CD4-positive, alpha-beta memory T cell (primary cell): ENCODE measurements at regions of chr5 and their contacts with region 1.

Region 1: GRCh38 chr5:134637161-134637582 is 4.5 kb upstream of the SAR1B start:
- DNase-seq: no peak
- H3K4me3 ChIP-seq: no peak overlapping the region
- H3K4me3 Mint-ChIP-seq: no peak overlapping the region
- H3K27ac ChIP-seq: no peak overlapping the region
- H3K27ac Mint-ChIP-seq: no peak overlapping the region
- H3K4me1 ChIP-seq: peaks cover 4% of the 10 kb centered on the region
- H3K4me1 Mint-ChIP-seq: peaks cover 0 to 13% (median under 1%) of the 10 kb centered on the region in 4 donors
- H3K27me3 ChIP-seq: no peaks in the 10 kb centered on the region
- H3K27me3 Mint-ChIP-seq: no peaks in the 10 kb centered on the region

Region 2: DNA sequence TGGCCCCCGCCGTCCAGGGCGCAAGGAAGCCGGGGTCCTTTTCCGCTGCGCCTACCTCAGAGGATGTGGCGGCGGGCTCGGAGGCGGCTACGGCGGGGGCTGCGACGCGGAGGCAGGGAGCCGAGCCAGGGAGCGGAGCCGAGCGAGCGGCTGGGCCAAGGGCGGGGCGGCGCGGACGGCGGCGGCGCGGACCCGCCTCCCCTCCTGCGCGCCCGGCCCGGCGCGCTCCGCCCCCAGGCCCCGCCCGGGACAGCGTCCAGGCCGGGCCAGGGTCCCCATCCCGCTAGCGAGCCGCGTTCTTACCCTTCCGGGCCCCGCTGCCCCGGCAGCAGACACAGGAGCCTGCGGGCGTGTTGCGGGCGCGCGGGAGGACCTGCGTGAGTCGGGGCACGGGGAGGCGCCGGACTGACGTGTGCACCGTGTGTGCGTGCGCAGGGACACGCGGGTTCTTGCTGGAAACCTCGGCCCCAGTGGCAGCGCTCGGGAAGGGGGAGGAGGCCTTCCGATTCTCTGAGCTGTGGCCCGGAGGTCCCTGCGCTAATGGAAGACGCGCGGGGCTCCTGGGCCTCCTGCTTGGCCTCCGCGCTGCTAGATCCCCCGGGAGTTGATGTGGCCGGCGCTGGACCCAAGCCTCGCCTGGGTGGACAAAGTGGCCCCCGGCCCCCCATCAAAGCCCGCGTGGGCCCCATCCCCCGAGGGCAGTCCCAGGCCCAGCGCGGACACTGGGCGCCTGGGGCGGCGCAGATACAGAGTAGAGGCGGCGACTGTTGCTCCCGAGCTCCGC is 632.4 kb before region 1 on chr5 and contains the start of gene VDAC1:
- CTCF ChIA-PET with region 1: no interaction called
- POLR2A ChIA-PET with region 1: interaction called, 3 read pairs
- intact Hi-C with region 1: loop called (anchors 10 kb)
- DNase-seq: peak; percentile 89 to 95 (median 92)
- H3K4me3 ChIP-seq: peak within 1 kb of the TSS; percentile 61 to 81
- H3K4me3 Mint-ChIP-seq: peak within 1 kb of the TSS; percentile 89 to 99 (median 93)
- H3K27ac ChIP-seq: peak within 1 kb of the TSS; percentile 96
- H3K27ac Mint-ChIP-seq: peak within 1 kb of the TSS; percentile 96 to 99 (median 98)
- H3K4me1 ChIP-seq: peaks cover 49% of the 10 kb centered on the region
- H3K4me1 Mint-ChIP-seq: peaks cover 26 to 50% (median 38%) of the 10 kb centered on the region in 4 donors
- H3K27me3 ChIP-seq: no peaks in the 10 kb centered on the region
- H3K27me3 Mint-ChIP-seq: no peaks in the 10 kb centered on the region
- total RNA-seq, gene VDAC1: 45.1 to 46.4 TPM

Region 3: DNA sequence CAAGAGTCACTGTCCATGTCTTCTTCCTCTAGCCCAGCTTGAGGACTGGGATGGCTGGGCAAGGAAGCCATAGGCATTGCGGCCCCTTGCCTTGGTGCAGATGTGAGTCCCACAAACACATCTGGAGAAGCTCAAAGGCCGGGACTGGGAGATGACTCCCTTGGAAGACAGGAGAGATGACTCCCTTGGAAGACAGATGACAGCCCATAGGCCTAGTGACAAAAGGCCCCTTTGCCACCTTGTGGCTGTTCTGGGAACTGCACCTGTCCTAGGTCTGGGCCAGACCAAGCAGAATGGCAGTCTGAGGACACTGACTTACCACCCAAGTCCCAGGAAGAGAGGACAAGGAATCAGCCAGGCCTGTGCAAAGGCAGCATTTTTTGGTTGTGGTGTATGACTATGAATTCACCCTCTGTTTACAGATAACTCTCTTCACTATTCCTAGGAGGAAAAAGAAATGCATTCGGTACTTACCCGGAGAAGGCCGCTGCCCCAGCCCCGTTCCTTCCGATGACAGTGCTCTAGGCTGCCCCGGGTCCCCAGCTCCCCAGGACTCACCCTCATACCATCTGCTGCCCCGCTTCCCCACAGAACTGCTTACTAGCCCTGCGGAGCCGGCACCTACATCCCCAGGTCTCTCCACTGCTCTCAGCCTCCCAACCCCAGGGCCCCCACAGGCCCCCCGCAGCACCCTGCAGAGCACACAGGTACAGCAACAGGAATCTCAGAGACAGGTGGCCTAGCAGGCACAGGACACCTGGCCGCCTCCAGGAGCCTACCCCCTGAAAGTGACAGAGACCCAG is 491.2 kb before region 1 on chr5:
- CTCF ChIA-PET with region 1: no interaction called
- POLR2A ChIA-PET with region 1: no interaction called
- intact Hi-C with region 1: no loop called
- DNase-seq: peak; percentile 74 to 83 (median 77)
- H3K4me3 ChIP-seq: no peak overlapping the region
- H3K4me3 Mint-ChIP-seq: peak overlapping the region in 2 of 8 donors; percentile 26 to 30
- H3K27ac ChIP-seq: no peak overlapping the region
- H3K27ac Mint-ChIP-seq: peak overlapping the region; percentile 11 to 98 (median 89)
- H3K4me1 ChIP-seq: peaks cover 24% of the 10 kb centered on the region
- H3K4me1 Mint-ChIP-seq: peaks cover 26 to 70% (median 44%) of the 10 kb centered on the region in 4 donors
- H3K27me3 ChIP-seq: no peaks in the 10 kb centered on the region
- H3K27me3 Mint-ChIP-seq: no peaks in the 10 kb centered on the region

Region 4: DNA sequence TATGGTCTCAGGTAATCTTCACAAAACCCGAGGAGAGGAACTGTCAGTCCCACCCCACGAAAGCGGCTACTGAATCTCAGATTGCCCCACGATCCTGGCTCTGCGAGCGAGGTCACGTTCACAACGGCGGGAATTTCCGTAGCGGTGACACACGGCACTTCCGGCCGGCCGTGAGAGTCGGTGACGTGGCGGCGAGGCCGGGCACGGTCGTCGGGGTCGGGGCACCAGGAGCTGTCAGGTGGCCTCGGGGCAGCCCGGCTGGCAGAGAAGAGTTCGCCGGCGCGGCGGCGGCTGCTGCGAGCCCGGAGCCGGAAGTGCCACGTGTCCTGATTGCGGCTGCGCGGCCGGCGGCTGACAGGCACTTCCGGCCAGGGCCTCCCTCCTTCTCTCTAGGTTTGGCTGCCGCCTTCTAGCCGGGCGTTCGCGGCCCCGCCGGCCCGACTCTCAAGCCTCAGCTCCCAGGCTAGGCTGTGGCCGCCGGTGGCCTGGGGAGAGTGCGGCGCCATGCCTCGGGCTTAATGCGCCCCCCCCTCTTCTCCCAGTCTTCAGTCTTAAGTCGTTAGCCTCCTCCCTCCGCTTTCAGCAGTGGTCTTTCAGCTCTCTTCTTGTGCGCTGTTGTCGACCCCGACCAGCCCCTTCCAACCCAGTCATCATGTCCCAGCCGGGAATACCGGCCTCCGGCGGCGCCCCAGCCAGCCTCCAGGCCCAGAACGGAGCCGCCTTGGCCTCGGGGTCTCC is 11.4 kb after region 1 on chr5 and contains the start of gene SEC24A:
- CTCF ChIA-PET with region 1: interaction called, 5 read pairs
- POLR2A ChIA-PET with region 1: interaction called, 33 read pairs
- intact Hi-C with region 1: loop called (anchors 1 kb)
- DNase-seq: peak; percentile 88 to 93 (median 90)
- H3K4me3 ChIP-seq: peak within 1 kb of the TSS; percentile 94 to 96
- H3K4me3 Mint-ChIP-seq: peak within 1 kb of the TSS; percentile 89 to 100 (median 97)
- H3K27ac ChIP-seq: peak within 1 kb of the TSS; percentile 99
- H3K27ac Mint-ChIP-seq: peak within 1 kb of the TSS; percentile 96 to 100 (median 99)
- H3K4me1 ChIP-seq: peaks cover 23% of the 10 kb centered on the region
- H3K4me1 Mint-ChIP-seq: peaks cover 16 to 33% (median 23%) of the 10 kb centered on the region in 4 donors
- H3K27me3 ChIP-seq: no peaks in the 10 kb centered on the region
- H3K27me3 Mint-ChIP-seq: no peaks in the 10 kb centered on the region
- total RNA-seq, gene SEC24A: 16.1 to 16.6 TPM

Region 5: GRCh38 chr5:134758504-134759341 is 121.6 kb after region 1 on chr5 and contains the start of gene DDX46:
- CTCF ChIA-PET with region 1: interaction called, 3 read pairs
- POLR2A ChIA-PET with region 1: no interaction called
- intact Hi-C with region 1: loop called (anchors 2 kb)
- DNase-seq: peak; percentile 92 to 93 (median 92)
- H3K4me3 ChIP-seq: peak within 1 kb of the TSS; percentile 82 to 84
- H3K4me3 Mint-ChIP-seq: peak within 1 kb of the TSS; percentile 99 to 100 (median 100)
- H3K27ac ChIP-seq: peak within 1 kb of the TSS; percentile 83
- H3K27ac Mint-ChIP-seq: peak within 1 kb of the TSS; percentile 86 to 99 (median 98)
- H3K4me1 ChIP-seq: peaks cover 25% of the 10 kb centered on the region
- H3K4me1 Mint-ChIP-seq: peaks cover 28 to 44% (median 38%) of the 10 kb centered on the region in 4 donors
- H3K27me3 ChIP-seq: no peaks in the 10 kb centered on the region
- H3K27me3 Mint-ChIP-seq: no peaks in the 10 kb centered on the region
- total RNA-seq, gene DDX46: 59.9 to 66.8 TPM